ENCODE measurements at regions of chr1 and their contacts with region 1.

Region 1: GRCh38 chr1:209095627-209096595 is 487.6 kb upstream of the CAMK1G start:
- DNase-seq: peak; percentile 56 to 59
- H3K4me3 ChIP-seq: no peak overlapping the region
- H3K4me3 Mint-ChIP-seq: no peak overlapping the region
- H3K27ac Mint-ChIP-seq: no peak overlapping the region
- H3K4me1 ChIP-seq: peaks cover 7% of the 10 kb centered on the region
- H3K4me1 Mint-ChIP-seq: peaks cover 10% of the 10 kb centered on the region
- H3K27me3 ChIP-seq: no peaks in the 10 kb centered on the region
- H3K27me3 Mint-ChIP-seq: peaks cover 3% of the 10 kb centered on the region
- CTCF ChIP-seq: no peak

Region 2: GRCh38 chr1:209155546-209155945 is 59.6 kb after region 1 on chr1:
- CTCF ChIA-PET with region 1: no interaction called
- POLR2A ChIA-PET with region 1: no interaction called
- intact Hi-C with region 1: loop called (anchors 1 kb)
- DNase-seq: peak; percentile 37 to 45
- H3K4me3 ChIP-seq: no peak overlapping the region
- H3K4me3 Mint-ChIP-seq: peak overlapping the region; percentile 0
- H3K27ac Mint-ChIP-seq: no peak overlapping the region
- H3K4me1 ChIP-seq: peaks cover 33% of the 10 kb centered on the region
- H3K4me1 Mint-ChIP-seq: peaks cover 20% of the 10 kb centered on the region
- H3K27me3 ChIP-seq: no peaks in the 10 kb centered on the region
- H3K27me3 Mint-ChIP-seq: no peaks in the 10 kb centered on the region
- CTCF ChIP-seq: no peak

Region 3: DNA sequence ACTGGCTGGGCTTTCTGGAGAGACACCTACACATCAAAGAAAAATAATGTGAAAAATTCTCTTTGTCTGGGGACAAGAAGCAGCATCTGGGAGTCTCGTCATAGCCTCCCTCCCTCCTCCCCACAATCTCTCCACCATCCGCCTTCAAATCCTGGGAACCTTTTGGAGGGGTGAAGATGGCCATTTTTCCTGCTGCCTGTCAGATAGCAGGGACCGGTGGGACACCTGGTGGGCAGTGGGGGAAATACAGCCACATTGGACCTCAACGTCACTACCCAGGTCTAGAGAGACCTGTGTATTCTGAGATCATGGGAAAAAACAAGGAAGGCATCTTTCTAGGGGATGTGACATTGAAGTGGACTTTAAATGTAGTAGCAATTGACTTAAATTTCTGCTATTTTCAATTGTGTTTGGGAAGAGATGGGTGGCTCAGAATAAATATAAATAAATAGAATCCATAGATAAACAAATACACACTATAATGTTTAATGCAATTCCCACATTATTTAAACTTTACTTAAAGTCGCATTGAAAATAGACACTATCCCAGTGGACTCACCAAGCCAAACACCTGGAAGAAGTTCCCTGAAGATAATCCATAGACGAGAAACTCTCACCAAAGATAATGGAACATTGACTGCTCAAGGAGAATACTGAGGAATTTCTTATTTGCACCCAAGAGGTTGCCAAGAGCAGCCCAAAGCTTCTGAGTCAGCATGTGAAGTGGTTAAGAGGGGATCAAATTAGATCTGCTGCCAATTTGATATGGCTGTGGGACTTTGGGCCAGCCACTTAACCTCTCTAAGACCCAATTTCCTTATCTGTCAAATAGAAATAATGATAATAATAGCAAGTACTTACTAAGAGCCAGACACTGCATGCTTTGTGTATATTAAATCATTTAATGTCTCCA is 340.0 kb after region 1 on chr1:
- CTCF ChIA-PET with region 1: no interaction called
- POLR2A ChIA-PET with region 1: no interaction called
- intact Hi-C with region 1: no loop called
- DNase-seq: peak; percentile 85 to 91
- H3K4me3 ChIP-seq: no peak overlapping the region
- H3K4me3 Mint-ChIP-seq: no peak overlapping the region
- H3K27ac Mint-ChIP-seq: peak overlapping the region; percentile 0
- H3K4me1 ChIP-seq: peaks cover 45% of the 10 kb centered on the region
- H3K4me1 Mint-ChIP-seq: peaks cover 19% of the 10 kb centered on the region
- H3K27me3 ChIP-seq: no peaks in the 10 kb centered on the region
- H3K27me3 Mint-ChIP-seq: no peaks in the 10 kb centered on the region
- CTCF ChIP-seq: peak; percentile 84 to 94